Activated CD8-positive, alpha-beta T cell treated with anti-CD3 and anti-CD28 coated beads for 36 hours (primary cell): ENCODE measurements at regions of chr1 and their contacts with region 1.

Region 1: DNA sequence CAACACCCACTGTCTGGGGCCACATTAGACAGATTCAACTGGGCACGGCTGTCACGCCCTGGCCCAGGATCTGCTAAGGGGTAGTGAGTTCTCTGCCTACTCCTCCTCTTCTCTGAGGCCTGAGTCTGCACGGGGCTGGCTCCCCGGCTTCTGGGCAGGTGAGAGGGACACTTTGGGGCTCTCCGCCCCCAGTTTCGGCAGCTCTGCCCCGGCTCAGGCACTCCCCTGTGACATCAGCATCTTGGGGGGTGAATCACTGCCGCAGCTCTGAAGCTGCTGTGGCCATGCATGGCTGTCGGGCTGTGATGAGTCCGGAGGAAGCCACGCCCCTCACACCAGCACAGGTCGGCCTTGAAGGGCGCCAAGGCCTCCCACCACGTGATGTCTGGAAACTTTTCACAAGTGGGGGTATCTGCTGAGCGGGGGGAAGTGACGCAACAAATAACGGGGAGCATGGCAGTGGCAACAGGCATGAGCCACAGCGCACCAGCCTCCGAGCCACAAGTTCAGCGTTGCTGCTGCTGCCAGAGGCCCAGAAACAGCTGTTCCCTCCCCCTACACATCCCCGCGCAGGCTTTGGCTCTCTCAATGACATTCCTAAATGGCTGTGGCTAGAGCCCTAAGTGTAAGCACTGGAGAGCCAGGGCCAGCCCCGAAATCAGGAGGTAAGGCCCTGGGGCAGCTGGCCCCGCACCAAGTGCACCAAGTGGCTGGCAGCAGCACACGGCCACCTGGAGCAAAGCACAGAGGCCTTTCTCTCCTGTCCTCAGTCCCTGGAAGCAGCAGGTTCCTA is 26.3 kb downstream of the ZBTB17 start:
- DNase-seq: peak; percentile 98
- ATAC-seq: peak; percentile 81
- H3K4me3 Mint-ChIP-seq: peak overlapping the region; percentile 62
- H3K27ac Mint-ChIP-seq: peak overlapping the region; percentile 98
- H3K4me1 Mint-ChIP-seq: peaks cover 76% of the 10 kb centered on the region
- H3K27me3 Mint-ChIP-seq: no peaks in the 10 kb centered on the region
- CTCF ChIP-seq: no peak

Region 2: DNA sequence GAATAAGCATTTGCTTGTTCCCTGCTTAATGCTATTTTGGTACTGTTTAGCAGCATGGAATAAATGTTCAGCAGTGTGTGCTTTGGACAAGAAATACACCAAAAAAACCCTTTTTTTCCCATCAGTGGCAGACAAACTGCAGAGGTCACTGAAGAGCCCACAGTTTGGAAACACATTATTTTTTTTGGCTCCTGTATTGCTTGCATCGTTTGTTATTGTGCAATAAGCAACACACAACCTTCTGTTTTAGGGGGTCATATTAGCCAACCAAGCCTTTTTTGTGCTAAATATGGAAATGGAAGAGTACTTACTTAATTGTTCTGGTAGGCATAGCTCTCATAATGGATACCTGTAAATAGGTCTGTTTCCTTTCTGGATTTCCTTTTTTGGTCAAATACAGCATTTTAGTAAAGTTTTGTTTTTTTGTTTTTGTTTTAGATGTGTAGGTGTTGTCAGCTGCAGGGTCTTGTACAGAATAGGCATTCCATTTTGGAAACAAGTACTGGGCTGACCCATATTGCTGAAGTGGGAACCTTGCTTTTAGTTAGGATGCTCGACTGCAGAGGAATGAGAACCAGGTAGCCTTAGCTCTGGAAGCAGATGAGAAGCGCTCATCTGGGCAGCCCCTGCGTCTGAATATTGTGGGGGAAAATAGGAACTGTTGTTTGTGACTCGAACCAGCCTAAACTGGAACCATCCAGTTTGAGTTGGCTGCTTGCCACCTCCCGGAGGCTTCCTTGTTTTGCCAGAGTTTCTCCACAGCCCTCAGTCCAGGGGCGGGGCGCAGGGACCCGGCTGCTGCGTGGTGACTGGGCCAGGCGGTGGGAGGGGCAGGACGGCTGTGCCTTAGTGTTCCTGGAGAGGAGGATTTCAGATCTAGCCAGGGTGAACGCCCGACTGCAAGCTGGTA is 63.7 kb before region 1 on chr1:
- CTCF ChIA-PET with region 1: no interaction called
- POLR2A ChIA-PET with region 1: no interaction called
- intact Hi-C with region 1: no loop called
- DNase-seq: peak; percentile 37
- ATAC-seq: peak; percentile 46
- H3K4me3 Mint-ChIP-seq: peak overlapping the region; percentile 40
- H3K27ac Mint-ChIP-seq: peak overlapping the region; percentile 53
- H3K4me1 Mint-ChIP-seq: peaks cover 60% of the 10 kb centered on the region
- H3K27me3 Mint-ChIP-seq: no peaks in the 10 kb centered on the region
- CTCF ChIP-seq: no peak

Region 3: GRCh38 chr1:15937706-15938168 is 11.9 kb before region 1 on chr1:
- CTCF ChIA-PET with region 1: no interaction called
- POLR2A ChIA-PET with region 1: interaction called, 14 read pairs
- intact Hi-C with region 1: no loop called
- DNase-seq: no peak
- ATAC-seq: no peak
- H3K4me3 Mint-ChIP-seq: no peak overlapping the region
- H3K27ac Mint-ChIP-seq: peak overlapping the region; percentile 80
- H3K4me1 Mint-ChIP-seq: peaks cover 12% of the 10 kb centered on the region
- H3K27me3 Mint-ChIP-seq: no peaks in the 10 kb centered on the region
- CTCF ChIP-seq: no peak

Region 4: GRCh38 chr1:15966081-15966955 is 16.7 kb after region 1 on chr1:
- CTCF ChIA-PET with region 1: interaction called, 7 read pairs
- POLR2A ChIA-PET with region 1: interaction called, 50 read pairs
- intact Hi-C with region 1: loop called (anchors 2 kb)
- DNase-seq: peak; percentile 96
- ATAC-seq: peak; percentile 75
- H3K4me3 Mint-ChIP-seq: peak overlapping the region; percentile 72
- H3K27ac Mint-ChIP-seq: peak overlapping the region; percentile 99
- H3K4me1 Mint-ChIP-seq: peaks cover 86% of the 10 kb centered on the region
- H3K27me3 Mint-ChIP-seq: no peaks in the 10 kb centered on the region
- CTCF ChIP-seq: no peak

Region 5: DNA sequence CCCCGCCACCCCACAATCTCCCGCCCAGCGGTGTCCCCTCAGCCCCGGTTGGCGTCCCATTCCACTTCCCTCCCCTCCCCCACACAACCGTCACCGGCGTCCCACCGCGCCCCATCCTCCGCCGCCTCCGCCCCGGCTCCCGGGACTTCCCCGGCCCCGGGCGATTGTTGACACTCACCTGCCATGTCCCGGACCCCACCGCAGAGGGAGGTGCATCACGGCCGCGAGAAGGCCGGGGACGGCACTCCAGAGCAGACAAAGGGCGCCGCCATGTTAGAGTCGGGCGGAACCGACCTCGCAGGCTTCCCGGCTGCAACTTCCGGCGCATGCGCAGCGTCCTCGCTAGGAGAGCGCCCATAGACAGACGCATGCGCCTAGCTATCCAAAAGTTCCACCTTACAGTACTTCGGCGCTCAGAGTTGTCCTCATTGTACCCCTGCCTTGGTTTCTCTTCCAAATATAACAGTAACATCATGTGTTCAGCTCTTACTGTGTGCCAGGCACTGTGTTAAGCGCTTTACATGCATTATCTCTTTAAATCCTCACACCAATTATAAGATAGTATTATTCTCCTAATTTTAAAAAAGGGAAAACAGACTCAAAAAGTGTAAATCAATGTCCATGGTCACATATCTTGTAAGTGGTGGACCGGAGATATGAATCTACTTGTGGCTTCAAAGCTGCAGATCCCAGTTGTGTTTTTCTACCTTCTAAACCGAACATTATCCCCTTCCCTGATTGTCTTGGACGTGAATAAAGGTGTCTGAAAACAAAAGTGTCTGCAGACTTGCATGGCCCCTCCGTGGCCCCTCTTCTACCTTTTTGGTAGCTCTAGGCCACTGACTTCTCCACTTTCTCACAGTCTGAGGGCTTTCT is 26.4 kb after region 1 on chr1 and contains the start of gene ZBTB17:
- CTCF ChIA-PET with region 1: interaction called, 14 read pairs
- POLR2A ChIA-PET with region 1: interaction called, 69 read pairs
- intact Hi-C with region 1: no loop called
- DNase-seq: peak; percentile 98
- ATAC-seq: peak; percentile 84
- H3K4me3 Mint-ChIP-seq: peak within 1 kb of the TSS; percentile 85
- H3K27ac Mint-ChIP-seq: peak within 1 kb of the TSS; percentile 89
- H3K4me1 Mint-ChIP-seq: peaks cover 36% of the 10 kb centered on the region
- H3K27me3 Mint-ChIP-seq: no peaks in the 10 kb centered on the region
- CTCF ChIP-seq: no peak
- total RNA-seq, gene ZBTB17: 44.1 to 45.7 TPM